CD4-positive, alpha-beta memory T cell (primary cell): ENCODE measurements at regions of chr19 and their contacts with region 1.

Region 1: DNA sequence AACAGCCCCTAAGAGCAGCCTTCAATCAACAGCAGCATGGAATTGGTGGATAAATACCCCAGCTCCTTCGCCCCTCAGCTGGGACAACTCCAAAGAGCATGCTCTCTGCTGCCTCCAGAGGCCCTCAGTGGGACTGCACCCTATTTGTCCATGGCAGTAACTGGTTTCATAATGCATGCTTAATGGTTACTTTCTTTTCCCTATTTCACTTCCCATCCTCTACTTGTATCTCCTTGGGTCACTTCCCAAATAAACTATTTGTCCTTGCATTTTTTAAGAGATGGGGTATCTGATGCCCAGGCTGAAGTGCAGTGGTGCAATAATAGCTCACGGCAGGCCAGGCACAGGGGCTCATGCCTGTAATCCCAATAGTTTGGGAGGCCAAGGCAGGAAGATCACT is 13.5 kb upstream of the TPM4 start:
- DNase-seq: peak; percentile 62 to 73 (median 67)
- H3K4me3 ChIP-seq: no peak overlapping the region
- H3K4me3 Mint-ChIP-seq: no peak overlapping the region
- H3K27ac ChIP-seq: no peak overlapping the region
- H3K27ac Mint-ChIP-seq: peak overlapping the region in 4 of 7 donors; percentile 15 to 56 (median 34)
- H3K4me1 ChIP-seq: peaks cover 12% of the 10 kb centered on the region
- H3K4me1 Mint-ChIP-seq: peaks cover 13 to 22% (median 19%) of the 10 kb centered on the region in 4 donors
- H3K27me3 ChIP-seq: no peaks in the 10 kb centered on the region
- H3K27me3 Mint-ChIP-seq: no peaks in the 10 kb centered on the region

Region 2: DNA sequence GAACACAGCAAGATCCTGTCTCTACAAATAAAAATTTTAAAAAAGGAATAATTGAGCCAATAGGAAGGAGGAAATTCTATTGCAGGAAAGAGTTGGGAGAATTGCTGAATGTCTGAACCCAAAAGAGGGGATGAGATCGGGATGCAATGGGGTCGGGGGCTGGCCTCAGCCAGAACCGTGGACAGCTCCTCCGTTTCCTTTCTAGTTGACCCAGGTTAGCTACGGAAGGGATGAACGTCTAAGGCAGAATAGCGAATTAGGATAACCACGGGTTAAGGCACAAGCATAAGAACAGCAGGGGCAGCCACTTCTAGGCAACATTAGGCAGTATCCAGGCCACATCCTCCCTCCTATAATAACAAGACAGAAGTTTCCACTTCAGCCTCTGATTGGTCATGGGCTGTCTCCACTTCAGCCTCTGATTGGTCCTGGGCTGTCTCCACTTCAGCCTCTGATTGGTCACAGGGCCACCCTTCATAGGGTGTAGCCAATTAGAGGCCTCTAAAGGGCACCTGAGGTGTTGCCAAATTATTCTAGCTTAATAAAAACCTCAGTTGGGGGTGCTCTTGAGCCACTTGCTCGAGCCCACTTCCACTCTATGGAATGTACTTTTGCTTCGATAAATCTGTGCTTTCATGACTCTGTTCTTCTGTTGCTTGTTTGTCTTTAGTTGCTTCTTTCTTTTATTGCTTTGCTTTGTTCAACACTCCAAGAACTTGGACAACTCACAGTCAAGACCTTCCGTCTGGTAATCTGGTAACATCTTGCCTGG is 11.3 kb before region 1 on chr19:
- CTCF ChIA-PET with region 1: interaction called, 10 read pairs
- POLR2A ChIA-PET with region 1: no interaction called
- intact Hi-C with region 1: no loop called
- DNase-seq: peak; percentile 56 to 77 (median 64)
- H3K4me3 ChIP-seq: no peak overlapping the region
- H3K4me3 Mint-ChIP-seq: no peak overlapping the region
- H3K27ac ChIP-seq: no peak overlapping the region
- H3K27ac Mint-ChIP-seq: peak overlapping the region in 5 of 7 donors; percentile 54 to 84 (median 78)
- H3K4me1 ChIP-seq: peaks cover 4% of the 10 kb centered on the region
- H3K4me1 Mint-ChIP-seq: peaks cover 2 to 20% (median 13%) of the 10 kb centered on the region in 4 donors
- H3K27me3 ChIP-seq: no peaks in the 10 kb centered on the region
- H3K27me3 Mint-ChIP-seq: no peaks in the 10 kb centered on the region

Region 3: DNA sequence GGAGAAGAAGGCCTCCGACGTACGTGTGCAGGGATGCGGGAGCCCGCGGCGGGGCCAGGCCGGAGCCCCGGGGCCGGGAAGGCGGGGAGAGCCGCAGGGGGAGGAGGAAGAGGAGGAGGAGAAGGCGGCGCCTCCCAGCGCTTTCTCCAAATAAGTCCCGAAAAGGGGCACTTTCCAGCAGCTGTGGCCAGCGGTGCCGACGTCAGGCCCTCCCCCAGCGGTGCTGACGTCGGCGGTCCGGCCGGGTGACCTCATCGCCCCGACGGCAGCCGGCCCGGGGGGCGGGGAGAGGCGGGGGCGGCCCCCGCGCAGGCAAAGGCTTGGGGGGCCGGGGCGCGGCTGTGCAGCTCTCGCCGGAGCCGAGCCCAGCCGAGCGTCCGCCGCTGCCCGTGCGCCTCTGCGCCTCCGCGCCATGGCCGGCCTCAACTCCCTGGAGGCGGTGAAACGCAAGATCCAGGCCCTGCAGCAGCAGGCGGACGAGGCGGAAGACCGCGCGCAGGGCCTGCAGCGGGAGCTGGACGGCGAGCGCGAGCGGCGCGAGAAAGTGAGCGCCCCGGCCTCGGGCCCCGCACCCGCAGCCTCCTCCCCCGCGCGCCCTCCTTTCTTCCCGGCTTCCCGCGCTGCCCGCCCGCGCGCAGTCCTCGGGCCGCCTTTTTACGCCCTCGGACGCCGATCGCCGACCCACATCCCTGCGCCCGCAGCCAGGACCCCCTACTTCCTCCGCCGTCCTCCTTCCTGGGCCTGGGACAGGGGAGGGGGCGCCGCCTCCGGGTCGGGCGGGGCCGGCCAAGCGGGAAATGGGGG is 13.6 kb after region 1 on chr19 and contains the start of gene TPM4:
- CTCF ChIA-PET with region 1: interaction called, 16 read pairs
- POLR2A ChIA-PET with region 1: interaction called, 5 read pairs
- intact Hi-C with region 1: loop called (anchors 2 kb)
- DNase-seq: peak; percentile 74 to 89 (median 76)
- H3K4me3 ChIP-seq: peak within 1 kb of the TSS; percentile 55 to 85
- H3K4me3 Mint-ChIP-seq: peak within 1 kb of the TSS; percentile 83 to 92 (median 91)
- H3K27ac ChIP-seq: peak within 1 kb of the TSS; percentile 91
- H3K27ac Mint-ChIP-seq: peak within 1 kb of the TSS; percentile 91 to 100 (median 99)
- H3K4me1 ChIP-seq: peaks cover 78% of the 10 kb centered on the region
- H3K4me1 Mint-ChIP-seq: peaks cover 42 to 83% (median 59%) of the 10 kb centered on the region in 4 donors
- H3K27me3 ChIP-seq: no peaks in the 10 kb centered on the region
- H3K27me3 Mint-ChIP-seq: no peaks in the 10 kb centered on the region
- total RNA-seq, gene TPM4: 94.7 to 96.8 TPM

Region 4: DNA sequence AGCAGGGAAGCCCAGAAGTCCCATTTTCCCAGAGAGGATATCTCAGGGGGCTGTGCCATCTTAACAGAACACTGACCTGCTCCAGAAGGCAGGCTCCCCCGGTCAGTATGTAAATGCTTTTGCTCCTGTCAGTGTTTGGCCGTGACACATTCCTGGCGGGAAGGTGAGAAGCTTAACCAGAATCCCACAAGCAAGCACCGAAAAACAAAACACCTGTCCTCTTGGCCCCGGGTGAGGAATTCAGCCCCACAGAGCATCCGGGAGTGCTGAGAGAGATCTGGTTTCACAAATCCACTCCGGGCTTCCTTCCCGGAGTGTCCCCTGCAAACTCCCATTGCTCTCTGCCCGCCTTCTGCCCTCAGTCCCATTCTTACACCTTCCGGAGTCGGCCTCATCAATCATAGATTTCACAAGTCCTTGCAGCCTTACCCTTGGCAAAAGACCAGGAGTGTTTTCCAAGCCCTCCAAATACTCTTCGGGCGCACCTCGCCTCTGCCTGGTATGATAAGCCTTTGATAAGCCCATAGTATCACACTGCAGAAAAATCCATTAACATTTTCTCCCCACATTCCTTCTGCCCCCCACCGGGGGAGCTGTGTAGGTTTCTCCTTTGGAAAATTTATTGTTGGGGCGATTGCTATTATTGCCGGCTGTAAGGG is 25.7 kb after region 1 on chr19:
- CTCF ChIA-PET with region 1: interaction called, 116 read pairs
- POLR2A ChIA-PET with region 1: interaction called, 13 read pairs
- intact Hi-C with region 1: no loop called
- DNase-seq: peak in 1 of 5 donors; percentile 10
- H3K4me3 ChIP-seq: no peak overlapping the region
- H3K4me3 Mint-ChIP-seq: peak overlapping the region in 4 of 8 donors; percentile 15 to 54 (median 34)
- H3K27ac ChIP-seq: no peak overlapping the region
- H3K27ac Mint-ChIP-seq: peak overlapping the region; percentile 61 to 82 (median 72)
- H3K4me1 ChIP-seq: peaks cover 53% of the 10 kb centered on the region
- H3K4me1 Mint-ChIP-seq: peaks cover 27 to 58% (median 36%) of the 10 kb centered on the region in 4 donors
- H3K27me3 ChIP-seq: no peaks in the 10 kb centered on the region
- H3K27me3 Mint-ChIP-seq: no peaks in the 10 kb centered on the region

Region 5: GRCh38 chr19:16095071-16095571 is 32.3 kb after region 1 on chr19:
- CTCF ChIA-PET with region 1: interaction called, 32 read pairs
- POLR2A ChIA-PET with region 1: interaction called, 3 read pairs
- intact Hi-C with region 1: no loop called
- DNase-seq: peak in 1 of 5 donors; percentile 37
- H3K4me3 ChIP-seq: no peak overlapping the region
- H3K4me3 Mint-ChIP-seq: peak overlapping the region in 6 of 8 donors; percentile 7 to 63 (median 46)
- H3K27ac ChIP-seq: peak overlapping the region; percentile 10
- H3K27ac Mint-ChIP-seq: peak overlapping the region; percentile 43 to 94 (median 88)
- H3K4me1 ChIP-seq: peaks cover 14% of the 10 kb centered on the region
- H3K4me1 Mint-ChIP-seq: peaks cover 14 to 22% (median 18%) of the 10 kb centered on the region in 4 donors
- H3K27me3 ChIP-seq: no peaks in the 10 kb centered on the region
- H3K27me3 Mint-ChIP-seq: no peaks in the 10 kb centered on the region

Region 6: GRCh38 chr19:16143399-16144245 is 80.8 kb after region 1 on chr19 and contains the start of gene HSH2D:
- CTCF ChIA-PET with region 1: interaction called, 17 read pairs
- POLR2A ChIA-PET with region 1: interaction called, 4 read pairs
- intact Hi-C with region 1: no loop called
- DNase-seq: peak; percentile 76 to 87 (median 79)
- H3K4me3 ChIP-seq: peak within 1 kb of the TSS; percentile 74 to 84
- H3K4me3 Mint-ChIP-seq: peak within 1 kb of the TSS; percentile 91 to 97 (median 95)
- H3K27ac ChIP-seq: peak within 1 kb of the TSS; percentile 82
- H3K27ac Mint-ChIP-seq: peak within 1 kb of the TSS; percentile 83 to 99 (median 96)
- H3K4me1 ChIP-seq: peaks cover 42% of the 10 kb centered on the region
- H3K4me1 Mint-ChIP-seq: peaks cover 20 to 51% (median 33%) of the 10 kb centered on the region in 4 donors
- H3K27me3 ChIP-seq: no peaks in the 10 kb centered on the region
- H3K27me3 Mint-ChIP-seq: no peaks in the 10 kb centered on the region
- total RNA-seq, gene HSH2D: 17.8 to 18.8 TPM

Region 7: GRCh38 chr19:16301999-16302694 is 239.4 kb after region 1 on chr19:
- CTCF ChIA-PET with region 1: no interaction called
- POLR2A ChIA-PET with region 1: no interaction called
- intact Hi-C with region 1: no loop called
- DNase-seq: no peak
- H3K4me3 ChIP-seq: no peak overlapping the region
- H3K4me3 Mint-ChIP-seq: no peak overlapping the region
- H3K27ac ChIP-seq: no peak overlapping the region
- H3K27ac Mint-ChIP-seq: no peak overlapping the region
- H3K4me1 ChIP-seq: no peaks in the 10 kb centered on the region
- H3K4me1 Mint-ChIP-seq: no peaks in the 10 kb centered on the region
- H3K27me3 ChIP-seq: no peaks in the 10 kb centered on the region
- H3K27me3 Mint-ChIP-seq: no peaks in the 10 kb centered on the region